K562 (cell line): ENCODE measurements at regions of chr6 and their contacts with region 1.

Region 1: GRCh38 chr6:139515511-139515910 is 141.1 kb upstream of the CITED2 start:
- DNase-seq: no peak
- ATAC-seq: no peak
- H3K4me3 ChIP-seq: no peak overlapping the region
- H3K27ac ChIP-seq: no peak overlapping the region
- H3K4me1 ChIP-seq: peaks cover 11 to 44% of the 10 kb centered on the region in 2 experiments; a peak in 4 of 5 replicates
- H3K27me3 ChIP-seq: no peaks in the 10 kb centered on the region
- CTCF ChIP-seq: no peak
- EP300 ChIP-seq: no peak
- POLR2A ChIP-seq: no peak
- RAD21 ChIP-seq: no peak

Region 2: DNA sequence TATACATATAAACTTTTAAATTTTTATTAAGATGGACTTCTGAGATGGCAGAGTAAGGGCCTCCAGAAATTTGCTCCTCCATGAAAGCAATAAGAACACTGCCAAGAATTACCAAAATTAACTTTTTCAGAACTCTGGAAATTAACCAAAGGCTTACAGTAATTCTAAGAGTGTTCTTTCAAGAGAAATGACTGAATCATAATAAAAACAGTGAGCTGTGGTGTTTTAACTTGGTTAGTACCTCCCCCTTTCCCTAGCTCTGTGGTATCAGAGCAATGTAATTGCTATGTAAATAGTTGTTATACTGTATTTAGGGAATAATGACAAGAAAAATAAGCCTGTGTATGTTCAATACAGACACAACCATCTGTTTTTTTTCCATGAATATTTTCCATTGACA is 361.7 kb before region 1 on chr6:
- CTCF ChIA-PET with region 1: no interaction called
- POLR2A ChIA-PET with region 1: no interaction called
- in situ Hi-C with region 1: no loop called
- intact Hi-C with region 1: no loop called
- DNase-seq: no peak
- ATAC-seq: no peak
- H3K4me3 ChIP-seq: no peak overlapping the region
- H3K27ac ChIP-seq: no peak overlapping the region
- H3K4me1 ChIP-seq: no peaks in the 10 kb centered on the region
- H3K27me3 ChIP-seq: peaks cover 8 to 10% of the 10 kb centered on the region in 2 experiments; a peak in 4 of 5 replicates
- CTCF ChIP-seq: no peak
- EP300 ChIP-seq: no peak
- POLR2A ChIP-seq: no peak
- RAD21 ChIP-seq: no peak

Region 3: GRCh38 chr6:139448051-139448649 is 67.4 kb before region 1 on chr6:
- CTCF ChIA-PET with region 1: no interaction called
- POLR2A ChIA-PET with region 1: no interaction called
- in situ Hi-C with region 1: no loop called
- intact Hi-C with region 1: loop called (anchors 2 kb)
- DNase-seq: peak in 3 of 4 experiments; percentile 27 to 70 (median 35)
- ATAC-seq: peak; percentile 30
- H3K4me3 ChIP-seq: no peak overlapping the region
- H3K27ac ChIP-seq: peak overlapping the region; percentile 87
- H3K4me1 ChIP-seq: peaks cover 11 to 65% of the 10 kb centered on the region in 2 experiments
- H3K27me3 ChIP-seq: no peaks in the 10 kb centered on the region
- CTCF ChIP-seq: no peak
- EP300 ChIP-seq: peak; percentile 66
- POLR2A ChIP-seq: no peak
- RAD21 ChIP-seq: 0 out of 4 replicates have a peak, but pooled peaks of 1 of the 2 experiments have one; percentile 28

Region 4: GRCh38 chr6:139496654-139497344 is 18.7 kb before region 1 on chr6:
- CTCF ChIA-PET with region 1: no interaction called
- POLR2A ChIA-PET with region 1: interaction called, 6 read pairs
- in situ Hi-C with region 1: no loop called
- intact Hi-C with region 1: loop called (anchors 2 kb)
- DNase-seq: peak in 2 of 4 experiments; percentile 46 to 70
- ATAC-seq: peak; percentile 75
- H3K4me3 ChIP-seq: peak overlapping the region; percentile 4; the same call in 1 of the 2 replicates
- H3K27ac ChIP-seq: peak overlapping the region; percentile 57
- H3K4me1 ChIP-seq: peaks cover 19 to 22% of the 10 kb centered on the region in 2 experiments
- H3K27me3 ChIP-seq: no peaks in the 10 kb centered on the region
- CTCF ChIP-seq: no peak
- EP300 ChIP-seq: no peak
- POLR2A ChIP-seq: no peak
- RAD21 ChIP-seq: no peak

Region 5: DNA sequence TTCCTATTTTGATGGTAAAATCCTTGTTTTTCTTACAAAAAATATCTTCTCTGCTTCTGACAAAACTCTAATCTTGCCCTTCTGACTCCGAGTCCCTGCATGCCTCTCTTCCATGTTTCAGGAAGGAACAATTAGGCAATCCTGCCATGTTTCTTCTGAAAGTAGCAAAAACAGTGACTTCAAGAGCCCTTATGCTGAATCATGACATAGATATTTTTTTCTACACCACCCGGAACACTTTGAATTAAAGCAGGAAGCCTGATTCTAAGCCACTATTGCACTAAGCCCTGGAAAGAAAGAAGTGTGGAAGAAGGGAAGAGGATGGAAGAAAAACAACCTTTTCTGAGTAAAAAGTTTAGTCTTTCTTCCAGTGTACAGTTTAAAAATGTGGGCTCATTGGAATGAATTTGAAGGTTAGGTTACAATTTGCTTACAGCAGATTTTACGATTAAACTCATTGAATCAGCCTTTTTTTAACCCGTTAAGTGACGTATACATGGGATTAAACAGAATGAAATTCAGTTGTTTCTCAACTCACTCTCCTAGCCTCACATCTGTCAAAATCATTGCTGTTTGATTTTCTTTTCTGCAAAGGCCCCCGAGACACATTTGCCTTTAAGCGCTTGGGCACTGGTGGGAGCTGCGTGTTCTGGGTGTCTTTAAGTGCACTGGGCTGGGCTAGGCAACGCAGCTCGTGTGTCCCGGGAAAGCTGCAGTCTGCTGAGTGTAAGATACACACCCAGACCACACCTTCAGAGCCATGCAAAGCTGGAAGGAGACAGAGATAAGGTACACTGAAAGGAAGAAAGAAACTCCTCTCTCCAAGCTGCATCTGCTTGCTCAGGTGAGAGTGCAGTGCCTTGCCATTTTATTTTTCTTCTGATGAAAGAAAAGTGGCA is 18.3 kb after region 1 on chr6:
- CTCF ChIA-PET with region 1: no interaction called
- POLR2A ChIA-PET with region 1: interaction called, 16 read pairs
- in situ Hi-C with region 1: no loop called
- intact Hi-C with region 1: loop called (anchors 1 kb)
- DNase-seq: peak; percentile 70 to 95 (median 78)
- ATAC-seq: peak; percentile 94
- H3K4me3 ChIP-seq: 0 out of 2 replicates have a peak overlapping the region, but pooled peaks have one; percentile 5
- H3K27ac ChIP-seq: peak overlapping the region; percentile 70
- H3K4me1 ChIP-seq: peaks cover 10 to 44% of the 10 kb centered on the region in 2 experiments; a peak in 4 of 5 replicates
- H3K27me3 ChIP-seq: no peaks in the 10 kb centered on the region
- CTCF ChIP-seq: no peak
- EP300 ChIP-seq: peak; percentile 75
- POLR2A ChIP-seq: no peak; the same call in 1 of the 2 replicates
- RAD21 ChIP-seq: peak in 1 of 2 experiments; percentile 20; a peak in 1 of 4 replicates

Region 6: DNA sequence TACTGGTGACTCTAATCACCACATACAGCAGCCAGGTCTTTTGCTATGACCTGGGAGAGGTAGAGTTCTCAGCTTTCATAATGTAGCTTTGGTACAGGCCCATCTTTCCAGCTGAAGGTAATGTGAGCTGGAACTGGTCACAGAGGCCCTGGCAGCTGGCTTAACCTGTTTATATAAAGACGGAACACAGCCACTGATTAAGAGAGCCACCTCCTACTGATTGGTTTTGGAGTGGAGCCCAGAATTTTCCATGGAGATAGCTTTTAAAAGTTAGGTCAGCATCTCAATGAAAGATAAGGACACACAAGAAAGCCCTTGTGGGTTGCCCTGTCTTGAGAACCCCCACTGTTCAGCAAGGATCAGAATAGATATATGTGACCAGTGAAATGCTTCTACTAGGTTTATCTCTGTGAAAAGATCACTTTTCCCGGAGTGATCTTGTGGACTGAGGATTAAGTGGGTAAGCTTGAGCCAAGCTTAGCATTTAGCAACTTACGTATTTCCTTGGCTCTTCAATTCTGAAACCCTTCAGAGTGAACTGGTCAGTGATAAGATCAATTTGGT is 72.6 kb after region 1 on chr6:
- CTCF ChIA-PET with region 1: no interaction called
- POLR2A ChIA-PET with region 1: no interaction called
- in situ Hi-C with region 1: no loop called
- intact Hi-C with region 1: loop called (anchors 2 kb)
- DNase-seq: peak; percentile 39 to 83 (median 58)
- ATAC-seq: peak; percentile 63
- H3K4me3 ChIP-seq: no peak overlapping the region
- H3K27ac ChIP-seq: no peak overlapping the region
- H3K4me1 ChIP-seq: peaks cover 0 to 31% of the 10 kb centered on the region in 2 experiments; a peak in 3 of 5 replicates
- H3K27me3 ChIP-seq: no peaks in the 10 kb centered on the region
- CTCF ChIP-seq: no peak
- EP300 ChIP-seq: peak; percentile 55
- POLR2A ChIP-seq: no peak
- RAD21 ChIP-seq: peak in 1 of 2 experiments; percentile 18; a peak in 1 of 4 replicates

Region 7: DNA sequence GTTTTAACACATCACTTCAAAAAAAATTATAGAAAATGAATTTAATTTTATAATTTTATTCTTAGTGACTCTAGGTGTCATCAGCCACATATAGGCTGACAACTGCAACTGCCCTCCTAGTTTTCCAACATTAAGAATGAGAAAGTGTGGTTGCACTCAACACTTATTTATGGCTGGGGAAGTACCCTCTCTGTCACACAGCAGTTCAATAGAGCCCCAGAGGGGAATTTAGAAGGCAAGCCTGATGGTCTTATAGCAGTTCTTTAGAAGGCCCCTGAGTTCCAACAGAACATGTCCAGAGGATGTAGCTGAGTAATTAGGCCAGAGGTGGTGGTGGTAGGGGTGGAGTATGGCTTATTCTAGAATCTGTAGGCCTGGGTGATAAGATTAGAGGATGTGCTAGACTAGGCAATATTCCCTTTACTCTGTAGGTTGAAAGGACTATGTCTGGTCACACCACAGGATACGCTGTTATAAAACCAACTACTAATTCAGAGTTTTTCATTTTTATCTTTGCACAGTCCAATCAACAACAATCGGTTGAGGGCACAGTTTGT is 85.5 kb after region 1 on chr6:
- CTCF ChIA-PET with region 1: no interaction called
- POLR2A ChIA-PET with region 1: no interaction called
- in situ Hi-C with region 1: no loop called
- intact Hi-C with region 1: loop called (anchors 5 kb)
- DNase-seq: peak in 2 of 4 experiments; percentile 54 to 55
- ATAC-seq: peak; percentile 70
- H3K4me3 ChIP-seq: no peak overlapping the region
- H3K27ac ChIP-seq: no peak overlapping the region
- H3K4me1 ChIP-seq: peaks cover 4 to 27% of the 10 kb centered on the region in 2 experiments; a peak in 3 of 5 replicates
- H3K27me3 ChIP-seq: no peaks in the 10 kb centered on the region
- CTCF ChIP-seq: no peak
- EP300 ChIP-seq: no peak
- POLR2A ChIP-seq: no peak
- RAD21 ChIP-seq: 0 out of 4 replicates have a peak, but pooled peaks of 1 of the 2 experiments have one; percentile 5